ENCODE measurements at regions of chr5 and their contacts with region 1.

Region 1: GRCh38 chr5:81751009-81751835 is at the start of gene SSBP2:
- DNase-seq: peak; percentile 99
- ATAC-seq: peak; percentile 82
- H3K4me3 ChIP-seq: peak within 1 kb of the TSS; percentile 26 to 84 (median 74)
- H3K4me3 Mint-ChIP-seq: peak within 1 kb of the TSS; percentile 97
- H3K27ac ChIP-seq: peak within 1 kb of the TSS; percentile 74 to 89
- H3K27ac Mint-ChIP-seq: peak within 1 kb of the TSS; percentile 99
- H3K4me1 ChIP-seq: peaks cover 17 to 32% of the 10 kb centered on the region in 2 donors
- H3K4me1 Mint-ChIP-seq: peaks cover 35% of the 10 kb centered on the region
- H3K27me3 ChIP-seq: no peaks in the 10 kb centered on the region
- H3K27me3 Mint-ChIP-seq: no peaks in the 10 kb centered on the region
- CTCF ChIP-seq: no peak
- total RNA-seq, gene SSBP2: 40.9 and 41.7 TPM in 2 replicates

Region 2: DNA sequence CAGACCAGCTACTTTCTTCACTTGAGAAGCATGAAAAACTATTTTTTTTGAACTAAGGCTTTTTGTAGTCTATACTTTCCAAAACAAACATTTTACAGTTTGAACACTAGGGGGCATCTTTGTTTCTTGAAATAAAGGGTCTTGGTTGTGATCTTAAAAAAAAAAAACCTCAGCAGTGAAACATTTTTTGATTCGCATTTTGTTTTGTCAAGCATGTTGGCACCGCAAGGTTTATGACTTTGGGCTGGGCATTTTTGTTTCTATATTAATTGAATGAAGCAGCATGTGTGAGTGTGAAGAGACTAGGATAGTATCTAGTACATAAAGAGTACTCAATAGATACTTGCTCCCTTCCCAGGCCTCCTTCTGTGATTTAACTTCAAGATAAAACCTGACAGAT is 325.7 kb before region 1 on chr5:
- CTCF ChIA-PET with region 1: interaction called, 3 read pairs
- POLR2A ChIA-PET with region 1: no interaction called
- intact Hi-C with region 1: loop called (anchors 10 kb)
- DNase-seq: peak; percentile 54
- ATAC-seq: no peak
- H3K4me3 ChIP-seq: no peak overlapping the region
- H3K4me3 Mint-ChIP-seq: no peak overlapping the region
- H3K27ac ChIP-seq: no peak overlapping the region
- H3K27ac Mint-ChIP-seq: peak overlapping the region; percentile 70
- H3K4me1 ChIP-seq: no peaks in the 10 kb centered on the region
- H3K4me1 Mint-ChIP-seq: peaks cover 4% of the 10 kb centered on the region
- H3K27me3 ChIP-seq: no peaks in the 10 kb centered on the region
- H3K27me3 Mint-ChIP-seq: no peaks in the 10 kb centered on the region
- CTCF ChIP-seq: peak; percentile 85

Region 3: GRCh38 chr5:81631124-81631523 is 120.1 kb before region 1 on chr5:
- CTCF ChIA-PET with region 1: no interaction called
- POLR2A ChIA-PET with region 1: no interaction called
- intact Hi-C with region 1: loop called (anchors 10 kb)
- DNase-seq: peak; percentile 19
- ATAC-seq: peak; percentile 28
- H3K4me3 ChIP-seq: no peak overlapping the region
- H3K4me3 Mint-ChIP-seq: peak overlapping the region; percentile 23
- H3K27ac ChIP-seq: no peak overlapping the region
- H3K27ac Mint-ChIP-seq: no peak overlapping the region
- H3K4me1 ChIP-seq: peaks cover 9 to 31% of the 10 kb centered on the region in 2 donors
- H3K4me1 Mint-ChIP-seq: peaks cover 7% of the 10 kb centered on the region
- H3K27me3 ChIP-seq: no peaks in the 10 kb centered on the region
- H3K27me3 Mint-ChIP-seq: no peaks in the 10 kb centered on the region
- CTCF ChIP-seq: no peak

Region 4: GRCh38 chr5:81779125-81779915 is 28.1 kb after region 1 on chr5:
- CTCF ChIA-PET with region 1: no interaction called
- POLR2A ChIA-PET with region 1: interaction called, 8 read pairs
- intact Hi-C with region 1: loop called (anchors 1 kb)
- DNase-seq: peak; percentile 71
- ATAC-seq: peak; percentile 93
- H3K4me3 ChIP-seq: peak overlapping the region; percentile 24 to 75 (median 50)
- H3K4me3 Mint-ChIP-seq: peak overlapping the region; percentile 86
- H3K27ac ChIP-seq: peak overlapping the region; percentile 71 to 86
- H3K27ac Mint-ChIP-seq: peak overlapping the region; percentile 94
- H3K4me1 ChIP-seq: peaks cover 13 to 17% of the 10 kb centered on the region in 2 donors
- H3K4me1 Mint-ChIP-seq: peaks cover 21% of the 10 kb centered on the region
- H3K27me3 ChIP-seq: no peaks in the 10 kb centered on the region
- H3K27me3 Mint-ChIP-seq: no peaks in the 10 kb centered on the region
- CTCF ChIP-seq: no peak

Region 5: GRCh38 chr5:81971712-81972495 is 220.7 kb after region 1 on chr5 and contains the start of gene ATG10:
- CTCF ChIA-PET with region 1: interaction called, 3 read pairs
- POLR2A ChIA-PET with region 1: interaction called, 10 read pairs
- intact Hi-C with region 1: loop called (anchors 1 kb)
- DNase-seq: peak; percentile 94
- ATAC-seq: peak; percentile 91
- H3K4me3 ChIP-seq: peak within 1 kb of the TSS; percentile 70 to 99 (median 80)
- H3K4me3 Mint-ChIP-seq: peak within 1 kb of the TSS; percentile 90
- H3K27ac ChIP-seq: peak within 1 kb of the TSS; percentile 94 to 95
- H3K27ac Mint-ChIP-seq: peak within 1 kb of the TSS; percentile 92
- H3K4me1 ChIP-seq: peaks cover 4 to 7% of the 10 kb centered on the region in 2 donors
- H3K4me1 Mint-ChIP-seq: peaks cover 12% of the 10 kb centered on the region
- H3K27me3 ChIP-seq: no peaks in the 10 kb centered on the region
- H3K27me3 Mint-ChIP-seq: no peaks in the 10 kb centered on the region
- CTCF ChIP-seq: no peak
- total RNA-seq, gene ATG10: 9.8 and 11.6 TPM in 2 replicates

Region 6: DNA sequence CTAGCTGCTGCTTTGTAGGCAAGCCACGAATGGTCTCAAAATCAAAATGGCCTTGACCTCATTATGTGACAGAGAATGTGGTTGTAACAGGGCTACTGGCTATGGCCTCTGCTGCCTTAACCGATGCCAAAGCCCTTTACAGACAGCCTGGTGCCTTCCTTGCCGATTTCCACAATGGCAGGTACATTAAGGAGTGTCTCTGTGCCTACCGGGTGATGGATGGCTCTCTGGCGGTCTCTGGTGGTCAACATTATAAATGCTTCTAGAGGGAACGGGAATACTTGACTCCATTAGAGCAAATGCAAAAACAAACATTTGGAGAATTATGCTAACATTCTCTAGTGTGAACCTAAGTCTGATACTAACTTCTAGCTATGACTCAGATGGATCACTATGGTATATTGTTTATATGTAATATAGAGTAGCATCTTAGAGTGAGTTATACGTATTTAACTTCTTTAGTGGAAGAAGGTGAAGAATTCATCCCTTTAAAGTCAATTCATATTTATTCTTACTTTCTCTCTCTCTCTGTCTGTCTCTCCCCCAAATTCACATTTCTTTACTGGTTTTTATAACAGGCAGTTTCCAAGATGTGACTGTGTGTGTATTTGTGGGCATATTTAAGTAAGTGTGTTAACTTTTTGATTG is 474.4 kb after region 1 on chr5:
- CTCF ChIA-PET with region 1: no interaction called
- POLR2A ChIA-PET with region 1: no interaction called
- intact Hi-C with region 1: loop called (anchors 5 kb)
- DNase-seq: peak; percentile 77
- ATAC-seq: peak; percentile 73
- H3K4me3 ChIP-seq: no peak overlapping the region
- H3K4me3 Mint-ChIP-seq: no peak overlapping the region
- H3K27ac ChIP-seq: no peak overlapping the region
- H3K27ac Mint-ChIP-seq: no peak overlapping the region
- H3K4me1 ChIP-seq: peaks cover 2 to 4% of the 10 kb centered on the region in 2 donors
- H3K4me1 Mint-ChIP-seq: peaks cover 4% of the 10 kb centered on the region
- H3K27me3 ChIP-seq: no peaks in the 10 kb centered on the region
- H3K27me3 Mint-ChIP-seq: no peaks in the 10 kb centered on the region
- CTCF ChIP-seq: peak; percentile 96

Region 7: GRCh38 chr5:82494942-82495341 is 743.7 kb after region 1 on chr5:
- CTCF ChIA-PET with region 1: no interaction called
- POLR2A ChIA-PET with region 1: no interaction called
- intact Hi-C with region 1: no loop called
- DNase-seq: no peak
- ATAC-seq: no peak
- H3K4me3 ChIP-seq: no peak overlapping the region
- H3K4me3 Mint-ChIP-seq: no peak overlapping the region
- H3K27ac ChIP-seq: no peak overlapping the region
- H3K27ac Mint-ChIP-seq: no peak overlapping the region
- H3K4me1 ChIP-seq: no peaks in the 10 kb centered on the region
- H3K4me1 Mint-ChIP-seq: no peaks in the 10 kb centered on the region
- H3K27me3 ChIP-seq: no peaks in the 10 kb centered on the region
- H3K27me3 Mint-ChIP-seq: no peaks in the 10 kb centered on the region
- CTCF ChIP-seq: no peak

Measured in B cell (primary cell).